Ascending aorta (tissue), 2 donors: ENCODE measurements at regions of chr20 and their contacts with region 1.

Region 1: GRCh38 chr20:53915446-53916172 is 154.8 kb downstream of the BCAS1 start:
- DNase-seq: peak; percentile 87 to 98
- H3K4me3 ChIP-seq: peak overlapping the region; percentile 64 to 71
- H3K27ac ChIP-seq: peak overlapping the region; percentile 68 to 87
- H3K4me1 ChIP-seq: peaks cover 0 to 30% of the 10 kb centered on the region in 2 donors
- H3K27me3 ChIP-seq: no peaks in the 10 kb centered on the region
- CTCF ChIP-seq: peak; percentile 72 to 97 (median 96)

Region 2: GRCh38 chr20:53773792-53774401 is 141.7 kb before region 1 on chr20:
- intact Hi-C with region 1: loop called (anchors 2 kb)
- DNase-seq: no peak
- H3K4me3 ChIP-seq: no peak overlapping the region
- H3K27ac ChIP-seq: peak overlapping the region; percentile 68 to 72
- H3K4me1 ChIP-seq: peaks cover 0 to 12% of the 10 kb centered on the region in 2 donors
- H3K27me3 ChIP-seq: no peaks in the 10 kb centered on the region
- CTCF ChIP-seq: no peak

Region 3: GRCh38 chr20:53828682-53829254 is 86.8 kb before region 1 on chr20:
- intact Hi-C with region 1: loop called (anchors 1 kb)
- DNase-seq: peak in 1 of 2 donors; percentile 75
- H3K4me3 ChIP-seq: peak overlapping the region; percentile 48 to 49
- H3K27ac ChIP-seq: peak overlapping the region; percentile 85 to 93
- H3K4me1 ChIP-seq: peaks cover 0 to 19% of the 10 kb centered on the region in 2 donors
- H3K27me3 ChIP-seq: no peaks in the 10 kb centered on the region
- CTCF ChIP-seq: no peak

Region 4: DNA sequence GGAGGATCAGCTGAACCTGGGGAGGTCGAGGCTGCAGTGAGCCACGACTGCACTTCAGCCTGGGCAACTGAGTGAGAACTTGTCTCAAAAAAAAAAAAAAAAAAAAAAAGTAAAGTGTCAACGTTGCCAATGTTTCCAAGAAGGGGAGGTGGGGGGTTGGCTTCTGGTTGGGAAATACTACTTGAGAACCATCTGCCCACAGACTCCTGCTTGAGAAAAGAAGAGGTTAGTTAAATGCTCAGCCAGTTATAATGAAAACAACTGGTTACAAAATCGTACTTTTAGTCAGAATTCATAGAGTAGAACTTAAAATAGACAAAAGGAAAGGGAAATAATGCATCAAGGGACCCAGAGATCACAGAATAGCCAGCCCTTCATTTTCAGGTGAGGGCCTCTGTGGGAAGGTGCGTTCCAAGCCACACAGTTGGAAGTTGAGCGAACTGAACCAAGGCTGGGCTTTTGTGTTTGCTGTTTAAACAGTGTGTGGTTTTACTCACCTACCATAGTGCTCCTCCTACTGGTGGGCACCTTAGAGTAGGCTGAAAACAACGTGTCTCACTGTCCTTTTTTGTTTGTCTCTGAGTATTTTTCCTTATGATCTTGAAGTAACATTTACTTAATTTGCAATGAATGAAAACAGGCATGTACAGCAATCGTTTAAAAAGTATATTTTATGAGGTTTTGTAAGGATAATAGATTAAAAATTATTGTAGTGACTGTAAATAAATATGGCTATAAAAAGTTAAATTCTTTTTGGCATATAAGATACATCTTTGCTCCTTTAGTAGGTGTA is 45.9 kb before region 1 on chr20:
- intact Hi-C with region 1: loop called (anchors 5 kb)
- DNase-seq: peak in 1 of 2 donors; percentile 79
- H3K4me3 ChIP-seq: no peak overlapping the region
- H3K27ac ChIP-seq: no peak overlapping the region
- H3K4me1 ChIP-seq: peaks cover 0 to 29% of the 10 kb centered on the region in 2 donors
- H3K27me3 ChIP-seq: no peaks in the 10 kb centered on the region
- CTCF ChIP-seq: peak; percentile 47 to 73 (median 64)

Region 5: GRCh38 chr20:53899351-53900167 is 16.1 kb before region 1 on chr20:
- intact Hi-C with region 1: loop called (anchors 2 kb)
- DNase-seq: peak in 1 of 2 donors; percentile 72
- H3K4me3 ChIP-seq: no peak overlapping the region
- H3K27ac ChIP-seq: peak overlapping the region; percentile 70 to 71
- H3K4me1 ChIP-seq: peaks cover 0 to 22% of the 10 kb centered on the region in 2 donors
- H3K27me3 ChIP-seq: no peaks in the 10 kb centered on the region
- CTCF ChIP-seq: no peak

Region 6: DNA sequence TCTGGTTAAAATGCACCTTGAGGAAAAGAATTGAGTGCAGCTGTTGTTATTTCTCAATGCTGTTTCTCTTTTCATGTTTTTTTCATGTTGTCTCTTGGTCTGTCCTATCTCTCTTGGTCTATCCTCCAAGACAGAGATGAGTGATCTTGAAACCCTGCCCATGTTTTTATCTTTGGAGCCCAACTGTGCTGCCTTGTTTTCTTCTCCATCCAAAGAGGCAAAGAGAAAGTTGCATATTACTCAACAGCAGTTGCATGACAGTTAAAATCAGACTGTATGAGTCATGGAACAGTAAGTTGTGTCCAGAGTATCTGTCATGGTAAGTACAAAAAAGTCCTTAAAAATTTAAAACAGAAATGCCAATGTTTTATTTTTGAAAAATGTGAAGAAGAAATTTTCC is 128.5 kb after region 1 on chr20:
- intact Hi-C with region 1: no loop called
- DNase-seq: no peak
- H3K4me3 ChIP-seq: no peak overlapping the region
- H3K27ac ChIP-seq: no peak overlapping the region
- H3K4me1 ChIP-seq: no peaks in the 10 kb centered on the region
- H3K27me3 ChIP-seq: no peaks in the 10 kb centered on the region
- CTCF ChIP-seq: no peak

Region 7: GRCh38 chr20:54207743-54208547 is 292.3 kb after region 1 on chr20 and contains the start of gene PFDN4:
- intact Hi-C with region 1: loop called (anchors 10 kb)
- DNase-seq: peak in 1 of 2 donors; percentile 87
- H3K4me3 ChIP-seq: peak within 1 kb of the TSS; percentile 88 to 94
- H3K27ac ChIP-seq: peak within 1 kb of the TSS; percentile 96 to 98
- H3K4me1 ChIP-seq: peaks cover 0 to 16% of the 10 kb centered on the region in 2 donors
- H3K27me3 ChIP-seq: no peaks in the 10 kb centered on the region
- CTCF ChIP-seq: peak; percentile 58 to 83 (median 82)
- total RNA-seq, gene PFDN4: 68.9 TPM